ENCODE measurements at regions of chr17 and their contacts with region 1.

Region 1: DNA sequence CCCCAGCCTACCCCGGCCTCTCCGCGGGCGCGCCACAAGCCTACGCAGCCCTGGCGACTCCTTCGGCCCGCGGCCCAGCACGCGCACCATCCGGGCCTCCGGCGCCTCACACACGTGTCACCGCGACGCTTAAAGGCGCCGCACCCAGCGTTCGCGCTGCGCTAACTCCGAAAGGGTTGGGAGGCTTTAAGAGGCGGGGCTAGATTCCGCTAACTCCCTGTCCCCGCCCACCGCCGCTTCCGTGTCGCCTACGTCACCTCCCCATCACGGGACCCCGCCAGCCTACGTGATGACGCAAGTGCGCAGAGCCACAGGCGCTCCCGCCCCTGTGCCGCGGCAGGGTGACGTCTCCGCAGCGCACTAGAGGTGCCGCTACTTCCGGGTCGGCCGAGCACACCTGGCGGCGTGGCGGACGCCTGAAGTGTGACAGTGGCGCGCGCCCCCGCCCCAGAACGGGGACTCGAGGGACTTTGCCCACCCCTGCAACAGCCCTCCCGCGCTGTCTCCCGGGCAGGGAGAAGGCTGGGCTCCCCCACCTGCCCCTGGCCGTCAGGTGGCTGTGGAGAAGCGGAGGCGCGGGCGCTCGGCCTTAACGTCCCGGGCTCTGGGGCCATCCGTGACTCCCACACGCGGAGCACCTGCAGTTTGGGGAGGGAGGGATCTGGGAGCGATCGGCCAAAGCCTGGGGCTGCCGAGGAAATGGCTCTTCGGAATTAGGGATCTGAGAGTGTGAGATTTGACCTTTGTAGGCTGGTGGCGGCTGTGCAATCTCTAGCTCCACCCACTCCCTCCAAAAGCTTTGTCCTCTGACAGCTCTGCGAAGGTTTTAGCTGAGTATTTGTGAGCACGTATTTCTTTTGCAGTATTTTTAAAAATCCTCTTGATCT is at the start of gene USP36:
- DNase-seq: peak; percentile 98
- total RNA-seq, gene USP36: 28.8 and 32.9 TPM in 2 replicates

Region 2: DNA sequence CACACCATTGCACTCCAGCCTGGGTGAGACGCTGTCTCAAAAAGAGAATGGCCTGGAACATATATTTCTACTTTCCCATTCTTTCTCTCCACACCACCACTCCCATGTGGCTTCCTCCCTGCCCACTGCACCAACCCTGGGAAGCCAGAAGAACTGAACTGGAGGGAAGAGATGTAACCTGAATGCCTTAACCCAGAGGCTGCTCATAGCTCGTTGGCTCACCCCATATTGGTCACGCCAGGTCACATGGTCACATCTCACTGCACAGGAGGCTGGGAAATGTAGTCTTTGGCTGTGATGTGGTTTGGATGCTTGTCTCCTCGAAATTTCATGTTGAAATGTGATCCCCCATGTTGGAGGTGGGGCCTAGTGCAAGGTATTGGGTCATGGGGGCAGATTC is 257.9 kb before region 1 on chr17:
- in situ Hi-C with region 1: loop called (anchors 25 kb)
- DNase-seq: no peak

Measured in Caki2 (cell line).